CD14-positive monocyte (primary cell): ENCODE measurements at regions of chr12 and their contacts with region 1.

Region 1: DNA sequence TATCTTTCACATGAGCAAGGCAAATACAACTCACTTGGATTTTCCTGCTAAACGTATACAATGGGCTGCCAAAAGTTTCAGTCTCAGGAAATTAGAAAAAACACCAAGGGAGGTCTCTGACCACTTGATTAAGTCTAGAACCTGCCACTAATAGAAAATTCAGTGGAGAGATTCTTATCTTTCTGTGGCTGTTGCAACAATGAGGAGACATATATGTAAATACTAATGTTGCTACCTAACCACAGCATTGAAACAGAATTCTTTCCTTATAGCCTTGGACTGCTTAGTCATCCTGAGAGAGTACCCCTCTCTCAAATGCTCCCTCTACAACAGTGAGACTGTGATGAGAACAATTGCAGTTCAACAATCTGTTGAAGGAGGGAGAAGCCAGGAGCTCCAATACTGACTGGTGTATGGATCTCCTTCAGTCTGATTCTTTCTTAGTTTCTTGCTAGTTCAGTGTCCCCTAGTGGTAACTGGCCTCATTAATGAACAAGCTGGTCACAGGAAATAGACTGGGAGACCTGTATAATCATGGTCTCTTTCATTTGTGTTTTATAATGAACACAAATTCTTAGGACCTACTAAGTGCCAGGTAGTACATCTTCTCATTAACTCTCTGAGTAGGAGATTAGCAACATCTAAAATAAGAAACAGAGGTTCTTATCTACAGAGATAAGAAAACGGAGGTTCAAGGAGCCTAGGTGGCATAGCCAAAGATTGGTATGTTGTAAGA is 164.5 kb downstream of the SLC38A4 start:
- DNase-seq: peak; percentile 25 to 57 (median 46)
- H3K4me3 ChIP-seq: peak overlapping the region in 2 of 3 experiments; percentile 16 to 45
- H3K4me3 Mint-ChIP-seq: peak overlapping the region in 1 of 2 donors; percentile 54
- H3K27ac ChIP-seq: peak overlapping the region in 1 of 2 donors; percentile 78
- H3K27ac Mint-ChIP-seq: peak overlapping the region; percentile 68 to 91 (median 83)
- H3K4me1 ChIP-seq: peaks cover 40 to 43% of the 10 kb centered on the region in 2 donors
- H3K4me1 Mint-ChIP-seq: peaks cover 44% of the 10 kb centered on the region
- H3K27me3 ChIP-seq: no peaks in the 10 kb centered on the region
- H3K27me3 Mint-ChIP-seq: no peaks in the 10 kb centered on the region
- CTCF ChIP-seq: peak; percentile 69

Region 2: GRCh38 chr12:46382964-46383653 is 278.2 kb before region 1 on chr12:
- intact Hi-C with region 1: loop called in 1 of 2 experiments (anchors 5 kb)
- DNase-seq: peak; percentile 95 to 96 (median 95)
- H3K4me3 ChIP-seq: peak overlapping the region; percentile 80 to 94 (median 86)
- H3K4me3 Mint-ChIP-seq: peak overlapping the region; percentile 83 to 92
- H3K27ac ChIP-seq: peak overlapping the region; percentile 96 to 100
- H3K27ac Mint-ChIP-seq: peak overlapping the region; percentile 96 to 99 (median 98)
- H3K4me1 ChIP-seq: peaks cover 46 to 53% of the 10 kb centered on the region in 2 donors
- H3K4me1 Mint-ChIP-seq: peaks cover 49% of the 10 kb centered on the region
- H3K27me3 ChIP-seq: no peaks in the 10 kb centered on the region
- H3K27me3 Mint-ChIP-seq: peaks cover 0 to 1% (median 0%) of the 10 kb centered on the region in 3 donors
- CTCF ChIP-seq: no peak

Region 3: GRCh38 chr12:46556105-46556559 is 105.1 kb before region 1 on chr12:
- intact Hi-C with region 1: loop called in 1 of 2 experiments (anchors 10 kb)
- DNase-seq: no peak
- H3K4me3 ChIP-seq: no peak overlapping the region
- H3K4me3 Mint-ChIP-seq: no peak overlapping the region
- H3K27ac ChIP-seq: no peak overlapping the region
- H3K27ac Mint-ChIP-seq: no peak overlapping the region
- H3K4me1 ChIP-seq: peaks cover 12 to 19% of the 10 kb centered on the region in 2 donors
- H3K4me1 Mint-ChIP-seq: peaks cover 20% of the 10 kb centered on the region
- H3K27me3 ChIP-seq: no peaks in the 10 kb centered on the region
- H3K27me3 Mint-ChIP-seq: no peaks in the 10 kb centered on the region
- CTCF ChIP-seq: no peak

Region 4: GRCh38 chr12:46773586-46774321 is 112.5 kb after region 1 on chr12:
- intact Hi-C with region 1: no loop called
- DNase-seq: no peak
- H3K4me3 ChIP-seq: no peak overlapping the region
- H3K4me3 Mint-ChIP-seq: no peak overlapping the region
- H3K27ac ChIP-seq: no peak overlapping the region
- H3K27ac Mint-ChIP-seq: peak overlapping the region in 1 of 7 donors; percentile 63
- H3K4me1 ChIP-seq: no peaks in the 10 kb centered on the region
- H3K4me1 Mint-ChIP-seq: no peaks in the 10 kb centered on the region
- H3K27me3 ChIP-seq: no peaks in the 10 kb centered on the region
- H3K27me3 Mint-ChIP-seq: peaks cover 0 to 2% (median 0%) of the 10 kb centered on the region in 3 donors
- CTCF ChIP-seq: no peak